Activated CD4-positive, alpha-beta T cell treated with anti-CD3 and anti-CD28 coated beads for 36 hours (primary cell): ENCODE measurements at regions of chr6 and their contacts with region 1.

Region 1: DNA sequence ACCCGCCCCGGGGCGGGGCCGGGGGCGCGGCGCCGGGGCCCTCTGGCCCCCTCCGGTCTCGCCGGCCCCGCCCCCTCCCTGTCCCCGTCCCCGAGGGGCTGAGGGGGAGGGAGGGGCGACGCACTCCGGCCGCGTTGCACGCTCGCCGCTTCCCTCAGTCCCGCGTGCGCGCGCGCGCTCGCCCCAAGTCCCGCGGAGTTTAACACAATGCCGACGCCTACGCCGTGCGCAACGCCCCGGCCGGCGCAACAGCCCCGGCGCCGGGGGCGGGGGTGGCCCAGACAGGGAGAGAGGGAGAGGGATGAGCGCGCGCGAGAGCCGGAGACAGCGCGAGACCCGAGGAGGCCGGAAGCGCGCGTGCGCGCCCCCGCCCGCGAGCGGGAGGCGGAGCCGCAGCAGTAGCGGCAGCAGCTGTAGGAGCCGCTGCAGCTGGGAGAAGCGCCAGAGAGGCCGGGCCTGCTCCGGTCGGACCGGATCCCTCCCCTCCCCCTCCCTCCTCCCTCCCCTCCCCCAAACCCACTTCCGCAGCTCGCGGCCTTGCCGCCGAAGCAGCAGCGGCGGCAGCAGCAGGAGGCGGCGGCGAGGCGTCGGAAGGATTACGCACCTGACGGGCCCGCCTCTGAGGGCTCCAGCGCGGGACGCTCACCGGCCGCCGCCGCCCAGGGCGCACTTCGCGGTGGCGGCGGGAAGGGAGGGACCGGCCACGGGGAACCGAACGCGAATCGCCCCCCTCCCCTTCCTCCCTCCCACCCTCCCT is 905 bp downstream of the ZBTB2 start:
- DNase-seq: peak; percentile 99
- ATAC-seq: peak; percentile 79
- H3K4me3 Mint-ChIP-seq: peak overlapping the region; percentile 92
- H3K27ac Mint-ChIP-seq: peak overlapping the region; percentile 31
- H3K4me1 Mint-ChIP-seq: peaks cover 51% of the 10 kb centered on the region
- H3K27me3 Mint-ChIP-seq: no peaks in the 10 kb centered on the region

Region 2: DNA sequence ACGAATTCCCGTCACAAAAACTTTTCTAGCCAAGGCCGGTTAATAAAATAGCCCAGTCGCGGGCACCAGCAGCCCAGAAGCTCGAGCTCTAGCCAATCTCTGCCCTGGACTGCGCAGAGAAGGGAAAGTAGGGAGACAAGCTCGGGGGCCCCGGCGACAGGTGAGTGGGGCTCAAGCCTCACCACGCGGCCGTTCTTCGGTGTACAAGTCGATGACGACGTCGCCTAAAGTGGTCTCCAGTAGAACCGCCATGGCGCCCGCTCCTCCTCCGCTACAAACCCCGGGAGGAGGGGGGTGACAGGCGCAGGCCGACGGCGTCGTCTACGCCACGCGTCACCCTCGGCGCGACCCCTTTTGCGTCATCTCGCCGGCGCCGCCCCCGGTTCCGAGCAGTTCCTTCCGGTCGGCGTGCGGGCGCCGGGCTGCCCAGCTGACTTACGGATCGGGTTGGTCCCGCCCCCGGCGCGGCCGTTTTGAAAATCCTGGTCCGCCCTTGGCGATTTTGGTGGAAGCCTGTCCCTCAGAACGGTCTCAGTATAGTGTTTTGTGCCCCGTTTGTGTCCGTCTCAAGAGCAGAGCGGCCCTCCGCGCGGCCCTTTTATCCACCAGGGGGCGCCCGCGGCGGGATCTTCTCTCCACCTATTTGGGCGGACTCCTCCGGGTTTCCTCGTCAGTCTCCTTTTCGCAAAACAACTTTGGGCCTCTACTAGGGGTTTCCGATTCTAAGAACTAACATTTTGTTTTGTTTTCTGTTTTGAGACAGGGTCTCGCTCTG is 1844.5 kb before region 1 on chr6 and contains the start of gene PPIL4:
- CTCF ChIA-PET with region 1: no interaction called
- POLR2A ChIA-PET with region 1: no interaction called
- intact Hi-C with region 1: loop called in 1 of 2 experiments (anchors 5 kb)
- DNase-seq: peak; percentile 98
- ATAC-seq: peak; percentile 85
- H3K4me3 Mint-ChIP-seq: peak within 1 kb of the TSS; percentile 97
- H3K27ac Mint-ChIP-seq: peak within 1 kb of the TSS; percentile 98
- H3K4me1 Mint-ChIP-seq: peaks cover 42% of the 10 kb centered on the region
- H3K27me3 Mint-ChIP-seq: no peaks in the 10 kb centered on the region
- total RNA-seq, gene PPIL4: 22.6 to 26.8 TPM

Region 3: DNA sequence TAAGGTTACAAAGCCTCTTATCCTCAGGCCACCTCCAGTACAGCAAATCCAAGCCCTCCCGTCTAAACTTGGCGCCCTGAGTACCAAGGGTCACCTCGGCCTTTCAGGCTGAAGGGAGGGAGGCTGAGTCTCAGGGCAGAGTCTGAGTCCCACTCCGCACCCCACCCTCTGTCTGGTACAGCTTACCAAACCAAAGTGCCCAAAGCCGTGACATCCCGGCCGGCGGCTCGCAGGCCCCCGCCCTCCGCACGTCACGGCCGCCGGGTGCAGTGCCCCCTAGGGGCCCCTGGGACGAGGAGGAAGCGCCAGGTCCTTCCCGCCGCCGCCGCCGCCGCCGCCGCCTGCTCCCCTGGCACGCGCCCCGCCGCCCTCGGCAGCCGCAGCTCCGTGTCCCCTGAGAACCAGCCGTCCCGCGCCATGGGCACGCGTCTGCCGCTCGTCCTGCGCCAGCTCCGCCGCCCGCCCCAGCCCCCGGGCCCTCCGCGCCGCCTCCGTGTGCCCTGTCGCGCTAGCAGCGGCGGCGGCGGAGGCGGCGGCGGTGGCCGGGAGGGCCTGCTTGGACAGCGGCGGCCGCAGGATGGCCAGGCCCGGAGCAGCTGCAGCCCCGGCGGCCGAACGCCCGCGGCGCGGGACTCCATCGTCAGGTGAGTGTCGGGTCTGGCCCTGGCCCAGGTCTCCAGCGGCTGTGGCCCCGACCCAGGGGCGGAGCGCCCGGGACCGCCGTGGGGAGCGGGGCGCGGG is 524.9 kb before region 1 on chr6 and contains the start of gene MTHFD1L:
- CTCF ChIA-PET with region 1: no interaction called
- POLR2A ChIA-PET with region 1: interaction called, 6 read pairs
- intact Hi-C with region 1: loop called in 1 of 2 experiments (anchors 1 kb)
- DNase-seq: peak; percentile 89
- ATAC-seq: peak; percentile 74
- H3K4me3 Mint-ChIP-seq: peak within 1 kb of the TSS; percentile 81
- H3K27ac Mint-ChIP-seq: peak within 1 kb of the TSS; percentile 94
- H3K4me1 Mint-ChIP-seq: peaks cover 38% of the 10 kb centered on the region
- H3K27me3 Mint-ChIP-seq: peaks cover 12% of the 10 kb centered on the region
- total RNA-seq, gene MTHFD1L: 103 to 129 TPM

Region 4: GRCh38 chr6:151379933-151380847 is 10.3 kb before region 1 on chr6:
- CTCF ChIA-PET with region 1: interaction called, 5 read pairs
- POLR2A ChIA-PET with region 1: no interaction called
- intact Hi-C with region 1: loop called in 1 of 2 experiments (anchors 1 kb)
- DNase-seq: peak; percentile 39
- ATAC-seq: peak; percentile 71
- H3K4me3 Mint-ChIP-seq: peak overlapping the region; percentile 77
- H3K27ac Mint-ChIP-seq: peak overlapping the region; percentile 99
- H3K4me1 Mint-ChIP-seq: peaks cover 65% of the 10 kb centered on the region
- H3K27me3 Mint-ChIP-seq: no peaks in the 10 kb centered on the region

Region 5: DNA sequence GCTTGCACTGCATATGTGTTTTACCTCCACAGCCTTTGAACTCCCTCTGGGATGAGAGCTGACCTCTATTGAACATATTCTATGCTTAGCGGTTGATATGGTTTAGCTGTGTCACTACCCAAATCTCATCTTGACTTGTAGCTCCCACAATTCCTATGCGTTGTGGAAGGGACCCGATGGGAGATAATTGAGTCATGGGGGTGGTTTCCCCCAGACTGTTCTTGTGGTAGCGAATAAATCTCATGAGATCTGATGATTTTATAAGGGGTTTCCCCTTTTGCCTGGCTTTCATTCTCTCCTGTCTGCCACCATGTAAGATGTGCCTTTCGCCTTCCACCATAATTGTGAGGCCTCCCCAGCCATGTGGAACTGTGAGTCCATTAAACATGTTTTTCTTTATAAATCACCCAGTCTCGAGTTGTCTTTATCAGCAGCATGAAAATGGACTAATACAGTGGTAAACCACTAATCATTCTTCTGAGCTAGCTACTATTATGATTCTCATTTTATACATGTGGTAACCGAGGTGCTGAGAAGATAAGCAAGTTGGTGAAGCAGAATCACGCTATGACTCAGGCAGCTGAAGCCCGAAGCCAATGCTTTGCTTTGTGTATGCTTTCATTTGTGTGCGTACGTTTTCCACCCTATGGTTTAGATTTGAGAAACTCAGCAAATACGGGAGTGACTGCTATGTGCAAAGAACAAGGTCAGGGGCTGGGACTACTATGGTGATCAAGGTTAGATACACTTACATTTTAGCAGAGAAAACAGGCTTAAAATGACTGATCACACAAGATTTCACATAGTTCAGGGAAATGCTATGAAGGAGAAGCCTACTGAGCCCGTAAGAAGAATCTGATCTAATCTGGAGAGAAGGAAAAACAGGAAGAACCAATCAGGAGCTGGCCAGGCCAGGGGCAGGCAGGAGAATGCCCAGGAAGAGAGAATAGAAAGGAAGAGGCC is 780.5 kb after region 1 on chr6:
- CTCF ChIA-PET with region 1: no interaction called
- POLR2A ChIA-PET with region 1: no interaction called
- intact Hi-C with region 1: loop called in 1 of 2 experiments (anchors 1 kb)
- DNase-seq: peak; percentile 80
- ATAC-seq: peak; percentile 94
- H3K4me3 Mint-ChIP-seq: peak overlapping the region; percentile 53
- H3K27ac Mint-ChIP-seq: peak overlapping the region; percentile 96
- H3K4me1 Mint-ChIP-seq: peaks cover 51% of the 10 kb centered on the region
- H3K27me3 Mint-ChIP-seq: no peaks in the 10 kb centered on the region

Region 6: DNA sequence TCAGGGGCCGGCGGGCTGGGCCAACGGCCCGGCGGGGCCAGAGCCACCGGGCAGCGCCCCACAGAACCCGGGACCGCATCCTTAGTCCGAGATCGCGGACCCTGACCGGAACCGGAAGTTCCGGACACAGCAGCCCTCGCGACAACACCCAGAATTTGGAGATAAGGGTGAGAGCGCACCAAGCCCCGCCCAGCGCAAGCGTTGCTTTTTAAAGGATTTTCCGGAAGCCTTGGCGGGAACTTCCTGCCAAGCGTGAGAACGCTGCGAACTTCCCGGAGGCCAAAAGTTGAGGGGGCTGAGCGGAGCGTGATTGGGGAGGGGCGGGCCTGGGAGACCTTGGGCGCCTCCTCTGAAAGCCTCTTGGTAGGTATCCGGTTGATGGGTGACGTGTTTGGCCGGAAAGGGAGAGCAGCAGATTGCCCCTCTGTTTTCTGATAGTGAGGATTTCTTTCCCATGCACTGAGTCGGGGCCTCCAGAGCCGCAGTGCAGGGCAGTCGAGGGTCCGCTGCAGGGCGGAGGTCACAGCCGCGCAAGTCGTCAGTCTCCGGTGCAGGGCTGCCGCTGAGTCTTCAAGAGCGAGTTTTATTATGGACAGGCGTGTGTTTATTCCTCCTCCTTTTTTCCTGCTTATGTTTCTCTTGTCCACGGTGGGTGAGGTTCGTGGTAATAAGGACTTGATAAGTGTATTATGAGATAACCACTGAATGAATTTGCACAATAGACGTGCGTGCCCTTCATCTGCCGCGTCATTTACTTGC is 1612.3 kb after region 1 on chr6 and contains the start of gene MTRF1L:
- CTCF ChIA-PET with region 1: no interaction called
- POLR2A ChIA-PET with region 1: no interaction called
- intact Hi-C with region 1: loop called in 1 of 2 experiments (anchors 1 kb)
- DNase-seq: peak; percentile 95
- ATAC-seq: peak; percentile 87
- H3K4me3 Mint-ChIP-seq: peak within 1 kb of the TSS; percentile 92
- H3K27ac Mint-ChIP-seq: peak within 1 kb of the TSS; percentile 99
- H3K4me1 Mint-ChIP-seq: peaks cover 36% of the 10 kb centered on the region
- H3K27me3 Mint-ChIP-seq: no peaks in the 10 kb centered on the region
- total RNA-seq, gene MTRF1L: 16.8 to 19.9 TPM